ENCODE measurements at regions of chr2 and their contacts with region 1.

Region 1: DNA sequence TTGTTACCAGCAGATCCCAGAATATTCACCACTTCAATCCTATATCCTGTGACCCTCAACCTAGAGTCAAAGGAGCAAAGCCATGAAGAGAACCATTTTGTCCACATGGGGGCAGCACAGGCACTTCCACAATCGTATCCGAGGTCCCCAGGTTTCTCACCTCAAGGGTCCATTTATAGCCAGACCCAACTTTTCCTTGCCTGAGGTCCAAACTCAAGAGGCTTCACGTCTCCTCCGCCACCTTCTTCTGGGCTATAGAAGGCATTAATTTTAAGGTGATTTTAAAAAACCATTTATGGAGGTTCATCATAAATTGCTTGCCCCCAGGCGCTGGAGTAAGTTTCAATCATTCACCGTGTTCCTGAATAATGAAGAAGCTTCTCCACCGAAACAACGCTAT is 111.6 kb upstream of the NABP1 start:
- DNase-seq: peak; percentile 77
- H3K4me3 Mint-ChIP-seq: no peak overlapping the region
- H3K27ac Mint-ChIP-seq: no peak overlapping the region
- H3K4me1 Mint-ChIP-seq: peaks cover 19% of the 10 kb centered on the region
- H3K27me3 Mint-ChIP-seq: no peaks in the 10 kb centered on the region
- CTCF ChIP-seq: peak; percentile 88

Region 2: GRCh38 chr2:191611614-191612013 is 45.3 kb after region 1 on chr2:
- CTCF ChIA-PET with region 1: no interaction called
- intact Hi-C with region 1: no loop called
- DNase-seq: no peak
- H3K4me3 Mint-ChIP-seq: no peak overlapping the region
- H3K27ac Mint-ChIP-seq: no peak overlapping the region
- H3K4me1 Mint-ChIP-seq: no peaks in the 10 kb centered on the region
- H3K27me3 Mint-ChIP-seq: no peaks in the 10 kb centered on the region
- CTCF ChIP-seq: no peak

Region 3: GRCh38 chr2:191691016-191691735 is 124.8 kb after region 1 on chr2:
- CTCF ChIA-PET with region 1: interaction called, 6 read pairs
- intact Hi-C with region 1: loop called (anchors 1 kb)
- DNase-seq: peak; percentile 53
- H3K4me3 Mint-ChIP-seq: peak overlapping the region; percentile 6
- H3K27ac Mint-ChIP-seq: peak overlapping the region; percentile 85
- H3K4me1 Mint-ChIP-seq: peaks cover 34% of the 10 kb centered on the region
- H3K27me3 Mint-ChIP-seq: no peaks in the 10 kb centered on the region
- CTCF ChIP-seq: peak; percentile 44

Measured in Calu3 (cell line).